ENCODE measurements at regions of chr5 and their contacts with region 1.

Region 1: DNA sequence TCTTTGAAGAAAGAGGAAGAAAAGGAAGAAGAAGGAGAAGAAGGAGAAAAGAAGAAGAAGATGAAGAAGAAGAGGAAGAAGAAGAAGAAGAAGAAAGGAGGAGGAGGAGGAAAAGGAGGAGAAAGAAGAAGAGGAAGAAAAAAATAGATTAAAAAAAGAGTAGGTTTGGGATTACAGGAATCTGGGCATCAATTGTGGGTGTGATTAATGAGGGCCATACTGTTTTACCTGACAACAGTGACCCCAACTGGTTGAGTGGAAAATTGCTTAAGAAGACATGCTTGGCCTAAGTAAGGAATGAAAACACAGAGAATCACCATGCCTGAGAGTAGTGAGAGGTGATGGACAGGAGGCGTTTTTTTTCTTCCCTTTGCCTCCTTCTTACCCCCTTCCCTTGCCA is 114.6 kb downstream of the FAM170A start:
- DNase-seq: peak; percentile 53
- H3K4me3 ChIP-seq: no peak overlapping the region
- H3K27ac ChIP-seq: no peak overlapping the region
- H3K4me1 ChIP-seq: peaks cover 5% of the 10 kb centered on the region
- H3K27me3 ChIP-seq: no peaks in the 10 kb centered on the region
- CTCF ChIP-seq: peak; percentile 60 to 67

Region 2: GRCh38 chr5:118987988-118988865 is 755.7 kb before region 1 on chr5 and contains the start of gene DTWD2:
- CTCF ChIA-PET with region 1: no interaction called
- dilution Hi-C with region 1: no loop called
- in situ Hi-C with region 1: loop called in 1 of 2 experiments (anchors 25 kb)
- intact Hi-C with region 1: loop called (anchors 1 kb)
- DNase-seq: peak; percentile 94
- H3K4me3 ChIP-seq: peak within 1 kb of the TSS; percentile 62 to 71 (median 70)
- H3K27ac ChIP-seq: peak within 1 kb of the TSS; percentile 65
- H3K4me1 ChIP-seq: peaks cover 8% of the 10 kb centered on the region
- H3K27me3 ChIP-seq: no peaks in the 10 kb centered on the region
- CTCF ChIP-seq: peak; percentile 74 to 90
- total RNA-seq, gene DTWD2: 6.1 to 9.5 TPM

Region 3: DNA sequence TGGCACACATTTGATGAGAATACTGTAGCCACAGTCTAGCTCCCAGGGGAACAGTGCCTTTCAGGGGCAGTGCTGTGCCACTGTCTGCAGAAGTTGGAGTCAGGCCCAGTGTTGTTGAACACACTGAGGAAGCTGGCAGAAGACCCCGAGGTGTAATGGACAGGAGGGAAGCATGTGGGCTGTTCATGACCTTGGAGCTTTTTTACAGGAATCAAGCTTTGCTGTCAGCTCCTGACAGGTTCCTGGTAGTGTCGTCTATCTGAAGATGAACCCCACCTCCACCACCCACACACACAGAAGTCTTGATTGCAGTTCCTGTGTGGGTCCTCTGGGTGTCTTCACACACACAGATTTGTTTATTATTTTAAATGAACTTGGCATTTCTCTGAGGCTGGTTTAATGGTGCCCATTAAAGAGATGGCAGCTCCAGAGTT is 428.4 kb before region 1 on chr5:
- CTCF ChIA-PET with region 1: no interaction called
- dilution Hi-C with region 1: no loop called
- in situ Hi-C with region 1: no loop called
- intact Hi-C with region 1: loop called (anchors 10 kb)
- DNase-seq: peak; percentile 50
- H3K4me3 ChIP-seq: no peak overlapping the region
- H3K27ac ChIP-seq: peak overlapping the region; percentile 3
- H3K4me1 ChIP-seq: peaks cover 14% of the 10 kb centered on the region
- H3K27me3 ChIP-seq: no peaks in the 10 kb centered on the region
- CTCF ChIP-seq: peak; percentile 47 to 63

Region 4: DNA sequence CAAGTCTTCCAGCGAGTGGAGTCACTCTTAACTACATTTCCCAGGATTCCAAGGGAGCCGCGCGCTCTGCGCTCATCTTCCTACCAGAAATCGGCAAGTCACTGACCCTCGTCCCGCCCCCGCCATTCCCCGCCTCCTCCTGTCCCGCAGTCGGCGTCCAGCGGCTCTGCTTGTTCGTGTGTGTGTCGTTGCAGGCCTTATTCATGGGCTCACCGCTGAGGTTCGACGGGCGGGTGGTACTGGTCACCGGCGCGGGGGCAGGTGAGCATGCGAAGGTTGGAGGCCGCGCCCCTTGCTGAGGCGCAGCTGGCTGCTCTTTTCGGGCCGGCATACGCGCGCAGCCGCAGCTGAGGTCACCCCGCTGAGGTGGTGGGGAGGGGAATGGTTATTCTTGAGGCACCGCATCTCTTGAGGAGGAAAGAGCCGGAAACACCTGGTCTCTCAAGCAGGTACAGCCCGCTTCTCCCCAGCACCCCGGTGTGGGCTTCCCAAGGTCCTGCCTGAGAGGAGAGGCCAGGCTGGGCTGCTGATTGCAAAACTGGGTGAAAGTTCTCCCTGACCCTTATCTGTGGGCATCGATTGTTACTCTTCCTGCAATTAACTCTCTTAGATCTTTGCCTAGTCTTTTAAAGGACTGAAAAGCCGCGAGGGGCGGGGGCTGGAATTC is 291.4 kb before region 1 on chr5 and contains the start of gene HSD17B4:
- CTCF ChIA-PET with region 1: no interaction called
- dilution Hi-C with region 1: no loop called
- in situ Hi-C with region 1: loop called in 1 of 2 experiments (anchors 25 kb)
- intact Hi-C with region 1: no loop called
- DNase-seq: peak; percentile 87
- H3K4me3 ChIP-seq: peak within 1 kb of the TSS; percentile 74 to 88 (median 76)
- H3K27ac ChIP-seq: peak within 1 kb of the TSS; percentile 67
- H3K4me1 ChIP-seq: peaks cover 9% of the 10 kb centered on the region
- H3K27me3 ChIP-seq: no peaks in the 10 kb centered on the region
- CTCF ChIP-seq: no peak
- total RNA-seq, gene HSD17B4: 131 to 168 TPM

Region 5: DNA sequence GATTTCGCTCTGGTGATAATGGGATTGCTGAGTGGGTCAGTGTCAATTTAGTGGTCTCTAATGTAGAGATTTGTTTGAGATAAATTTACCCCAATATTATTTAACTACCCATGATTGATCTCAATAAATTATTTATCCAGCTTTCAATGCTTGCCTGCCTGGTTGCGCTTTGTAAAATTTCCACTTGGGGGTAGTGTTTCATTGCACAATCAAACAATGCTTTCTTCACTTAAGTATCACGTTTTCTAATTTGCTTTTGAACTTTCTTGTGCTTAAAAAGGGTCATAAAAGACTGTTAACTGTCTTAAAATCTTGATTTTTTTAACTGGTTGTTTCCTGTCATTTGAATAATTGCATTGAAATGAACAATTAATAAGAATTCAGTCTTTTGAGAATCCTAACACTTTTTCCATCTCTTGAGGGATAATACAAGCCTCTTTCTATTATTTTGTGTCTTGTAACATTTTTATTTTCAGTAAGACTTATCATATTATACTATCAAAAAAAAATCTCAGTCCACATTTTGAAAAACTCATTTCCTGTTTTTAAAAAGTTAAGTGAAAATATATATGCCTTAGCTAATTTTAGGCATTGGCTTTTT is 273.0 kb before region 1 on chr5:
- CTCF ChIA-PET with region 1: no interaction called
- dilution Hi-C with region 1: no loop called
- in situ Hi-C with region 1: loop called in 1 of 2 experiments (anchors 25 kb)
- intact Hi-C with region 1: loop called (anchors 2 kb)
- DNase-seq: peak; percentile 19
- H3K4me3 ChIP-seq: no peak overlapping the region
- H3K27ac ChIP-seq: no peak overlapping the region
- H3K4me1 ChIP-seq: no peaks in the 10 kb centered on the region
- H3K27me3 ChIP-seq: no peaks in the 10 kb centered on the region
- CTCF ChIP-seq: peak; percentile 61 to 67

Region 6: GRCh38 chr5:119578937-119579336 is 165.0 kb before region 1 on chr5:
- CTCF ChIA-PET with region 1: no interaction called
- dilution Hi-C with region 1: no loop called
- in situ Hi-C with region 1: no loop called
- intact Hi-C with region 1: loop called (anchors 2 kb)
- DNase-seq: peak; percentile 36
- H3K4me3 ChIP-seq: no peak overlapping the region
- H3K27ac ChIP-seq: no peak overlapping the region
- H3K4me1 ChIP-seq: no peaks in the 10 kb centered on the region
- H3K27me3 ChIP-seq: no peaks in the 10 kb centered on the region
- CTCF ChIP-seq: peak; percentile 22 to 45

Measured in mammary epithelial cell (primary cell).